ENCODE measurements at regions of chr7 and their contacts with region 1.

Region 1: GRCh38 chr7:34759452-34760125 is 101.6 kb downstream of the NPSR1 start:
- DNase-seq: peak; percentile 61
- ATAC-seq: peak; percentile 39
- H3K4me3 ChIP-seq: peak overlapping the region; percentile 45 to 80 (median 47); a peak in 5 of 6 replicates
- H3K27ac ChIP-seq: peak overlapping the region; percentile 21
- H3K4me1 ChIP-seq: peaks cover 28% of the 10 kb centered on the region
- H3K27me3 ChIP-seq: no peaks in the 10 kb centered on the region
- CTCF ChIP-seq: peak; percentile 87
- EP300 ChIP-seq: no peak
- POLR2A ChIP-seq: no peak
- RAD21 ChIP-seq: peak; percentile 61

Region 2: DNA sequence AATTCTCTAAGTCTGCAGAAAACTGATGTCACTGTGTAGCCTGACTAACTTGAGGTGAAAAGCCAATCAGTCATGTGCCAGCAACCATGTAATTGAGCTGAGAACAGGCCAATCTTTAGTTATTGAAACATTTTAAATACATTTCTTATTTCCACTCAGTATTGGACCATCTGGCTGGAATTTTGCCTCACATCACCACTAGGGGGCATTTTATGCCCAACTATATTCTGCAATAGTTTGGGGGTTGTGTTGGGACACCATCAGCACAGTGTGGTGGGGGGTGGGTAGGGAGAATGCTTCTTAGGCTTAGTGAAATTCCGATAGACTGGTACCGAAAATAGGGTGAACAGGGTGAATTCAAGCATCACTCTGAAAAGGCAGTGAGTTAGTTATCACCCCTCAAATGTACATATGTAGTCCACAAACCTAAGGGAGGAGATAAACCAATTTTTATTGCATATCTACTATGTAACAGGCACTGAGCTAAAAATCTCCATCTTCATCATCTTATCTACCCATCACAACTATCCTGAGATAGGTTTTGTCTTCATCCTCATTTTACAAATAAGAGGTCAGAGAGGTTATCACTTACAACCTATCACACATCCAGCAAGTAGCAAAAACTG is 83.7 kb before region 1 on chr7:
- CTCF ChIA-PET with region 1: no interaction called
- POLR2A ChIA-PET with region 1: interaction called, 3 read pairs
- in situ Hi-C with region 1: no loop called
- intact Hi-C with region 1: loop called (anchors 5 kb)
- DNase-seq: peak; percentile 27
- ATAC-seq: peak; percentile 87
- H3K4me3 ChIP-seq: no peak overlapping the region
- H3K27ac ChIP-seq: no peak overlapping the region
- H3K4me1 ChIP-seq: peaks cover 9% of the 10 kb centered on the region
- H3K27me3 ChIP-seq: no peaks in the 10 kb centered on the region
- CTCF ChIP-seq: peak; percentile 76
- EP300 ChIP-seq: no peak
- POLR2A ChIP-seq: no peak
- RAD21 ChIP-seq: peak; percentile 41; the same call in 1 of the 2 replicates

Region 3: GRCh38 chr7:34823640-34824258 is 64.2 kb after region 1 on chr7:
- CTCF ChIA-PET with region 1: interaction called, 3 read pairs
- POLR2A ChIA-PET with region 1: no interaction called
- in situ Hi-C with region 1: no loop called
- intact Hi-C with region 1: loop called (anchors 2 kb)
- DNase-seq: peak; percentile 22
- ATAC-seq: peak; percentile 78
- H3K4me3 ChIP-seq: no peak overlapping the region
- H3K27ac ChIP-seq: no peak overlapping the region
- H3K4me1 ChIP-seq: no peaks in the 10 kb centered on the region
- H3K27me3 ChIP-seq: no peaks in the 10 kb centered on the region; a peak in 1 of 5 replicates
- CTCF ChIP-seq: peak; percentile 72
- EP300 ChIP-seq: no peak
- POLR2A ChIP-seq: no peak
- RAD21 ChIP-seq: peak; percentile 58

Region 4: GRCh38 chr7:34928049-34928448 is 168.5 kb after region 1 on chr7:
- CTCF ChIA-PET with region 1: no interaction called
- POLR2A ChIA-PET with region 1: no interaction called
- in situ Hi-C with region 1: no loop called
- intact Hi-C with region 1: loop called (anchors 2 kb)
- DNase-seq: peak; percentile 46
- ATAC-seq: peak; percentile 91
- H3K4me3 ChIP-seq: no peak overlapping the region
- H3K27ac ChIP-seq: no peak overlapping the region
- H3K4me1 ChIP-seq: no peaks in the 10 kb centered on the region
- H3K27me3 ChIP-seq: no peaks in the 10 kb centered on the region
- CTCF ChIP-seq: peak; percentile 67
- EP300 ChIP-seq: no peak
- POLR2A ChIP-seq: no peak
- RAD21 ChIP-seq: no peak

Region 5: DNA sequence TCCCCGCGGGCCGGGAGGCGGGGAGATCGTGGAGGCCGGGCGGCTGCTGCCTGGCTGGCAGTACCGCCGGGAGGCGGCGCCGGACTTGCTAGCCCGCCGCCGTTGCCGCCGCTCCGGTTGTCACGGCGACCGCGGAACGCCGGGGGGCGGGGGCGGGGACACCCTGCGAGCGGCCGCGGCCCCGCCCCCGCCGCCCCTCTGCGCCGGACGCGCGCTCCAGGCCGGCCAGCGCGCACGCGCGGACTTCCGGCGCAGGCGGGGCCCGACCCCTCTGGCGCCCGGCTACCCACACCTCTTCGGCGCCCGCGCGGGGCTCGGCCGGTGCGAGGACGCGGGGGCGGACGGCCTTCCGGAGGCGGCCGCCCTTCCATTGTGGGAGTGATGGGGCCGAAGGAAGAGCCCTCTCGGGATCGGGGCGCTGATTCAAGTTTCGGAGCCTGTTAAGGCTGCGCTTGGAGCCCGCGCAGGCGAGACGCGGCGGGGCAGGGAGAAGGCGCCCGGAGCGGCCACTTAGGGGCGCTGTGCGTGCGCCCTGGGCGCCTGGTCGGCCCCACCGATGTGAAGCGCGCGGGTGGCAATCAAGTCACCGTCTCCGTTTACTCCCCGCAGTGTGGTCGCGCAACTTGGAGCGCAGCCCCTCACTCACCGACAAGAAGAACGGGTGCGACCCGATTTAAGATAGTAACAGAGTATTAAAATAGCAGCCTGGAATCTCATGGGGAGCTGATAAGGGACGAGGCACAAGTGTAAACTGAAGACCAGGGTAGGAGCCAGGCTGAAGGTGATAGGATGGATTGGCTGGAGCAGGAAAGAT is 278.1 kb after region 1 on chr7:
- CTCF ChIA-PET with region 1: no interaction called
- POLR2A ChIA-PET with region 1: interaction called, 4 read pairs
- in situ Hi-C with region 1: no loop called
- intact Hi-C with region 1: loop called (anchors 2 kb)
- DNase-seq: peak; percentile 79
- ATAC-seq: peak; percentile 83
- H3K4me3 ChIP-seq: peak overlapping the region; percentile 79 to 84 (median 82)
- H3K27ac ChIP-seq: peak overlapping the region; percentile 74
- H3K4me1 ChIP-seq: peaks cover 40% of the 10 kb centered on the region
- H3K27me3 ChIP-seq: peaks cover 0 to 4% of the 10 kb centered on the region in 2 experiments; a peak in 1 of 5 replicates
- CTCF ChIP-seq: peak; percentile 89
- EP300 ChIP-seq: no peak
- POLR2A ChIP-seq: peak; percentile 27 to 66; a peak in 3 of 4 replicates
- RAD21 ChIP-seq: peak; percentile 75

Measured in HepG2 (cell line).